Panc1 (cell line): ENCODE measurements at regions of chr9 and their contacts with region 1.

Region 1: DNA sequence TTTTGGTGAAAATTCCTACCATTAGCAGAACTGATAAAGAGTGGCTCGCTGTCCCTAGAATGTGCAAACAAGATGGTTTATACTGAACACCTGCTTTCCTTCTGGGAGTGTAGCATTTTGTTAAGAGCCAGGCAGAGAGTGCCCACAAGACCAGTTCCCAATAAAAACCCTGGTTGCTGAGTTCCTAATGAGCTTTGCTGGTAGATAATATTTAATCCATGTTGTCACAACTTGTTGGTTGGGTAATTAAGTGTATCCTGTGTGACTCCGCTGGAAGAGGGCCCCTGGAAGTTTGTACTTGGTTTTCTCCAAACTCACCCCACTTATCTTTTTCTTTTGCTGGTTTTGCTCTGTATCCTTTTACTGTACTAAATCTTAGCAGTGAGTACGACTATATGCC is 39.5 kb upstream of the GOLGA1 start:
- DNase-seq: no peak
- ATAC-seq: no peak
- H3K4me3 ChIP-seq: no peak overlapping the region
- H3K27ac ChIP-seq: no peak overlapping the region
- H3K4me1 ChIP-seq: no peaks in the 10 kb centered on the region
- H3K27me3 ChIP-seq: no peaks in the 10 kb centered on the region
- CTCF ChIP-seq: no peak

Region 2: GRCh38 chr9:124849801-124850200 is 130.6 kb before region 1 on chr9:
- CTCF ChIA-PET with region 1: no interaction called
- POLR2A ChIA-PET with region 1: no interaction called
- in situ Hi-C with region 1: no loop called
- intact Hi-C with region 1: no loop called
- DNase-seq: no peak
- ATAC-seq: no peak
- H3K4me3 ChIP-seq: no peak overlapping the region
- H3K27ac ChIP-seq: no peak overlapping the region
- H3K4me1 ChIP-seq: no peaks in the 10 kb centered on the region; the same call in 1 of the 2 replicates
- H3K27me3 ChIP-seq: no peaks in the 10 kb centered on the region
- CTCF ChIP-seq: no peak

Region 3: DNA sequence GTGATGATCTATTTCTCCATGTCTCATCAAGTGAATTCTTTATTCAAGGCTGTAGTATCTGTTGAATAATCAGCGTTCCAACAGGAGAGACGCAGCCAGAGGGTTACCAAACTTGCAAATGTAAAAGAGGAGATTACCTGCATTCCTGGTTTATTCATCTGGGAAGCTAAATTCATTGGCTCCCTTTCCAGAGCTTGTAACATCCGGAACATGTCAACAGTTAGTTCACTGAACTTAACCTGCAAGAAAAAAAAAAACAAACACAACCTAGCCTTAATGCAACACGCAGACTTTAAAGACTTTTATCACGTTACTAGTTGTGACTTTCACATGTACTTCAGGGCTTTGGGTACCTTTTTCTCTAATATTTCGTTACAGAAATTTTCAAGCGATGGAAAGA is 22.9 kb after region 1 on chr9:
- CTCF ChIA-PET with region 1: no interaction called
- POLR2A ChIA-PET with region 1: interaction called, 11 read pairs
- in situ Hi-C with region 1: no loop called
- intact Hi-C with region 1: no loop called
- DNase-seq: no peak
- ATAC-seq: no peak
- H3K4me3 ChIP-seq: no peak overlapping the region
- H3K27ac ChIP-seq: no peak overlapping the region
- H3K4me1 ChIP-seq: no peaks in the 10 kb centered on the region
- H3K27me3 ChIP-seq: no peaks in the 10 kb centered on the region
- CTCF ChIP-seq: no peak